Dorsolateral prefrontal cortex (tissue), 120 donors: ENCODE measurements at regions of chr9 and their contacts with region 1.

Region 1: DNA sequence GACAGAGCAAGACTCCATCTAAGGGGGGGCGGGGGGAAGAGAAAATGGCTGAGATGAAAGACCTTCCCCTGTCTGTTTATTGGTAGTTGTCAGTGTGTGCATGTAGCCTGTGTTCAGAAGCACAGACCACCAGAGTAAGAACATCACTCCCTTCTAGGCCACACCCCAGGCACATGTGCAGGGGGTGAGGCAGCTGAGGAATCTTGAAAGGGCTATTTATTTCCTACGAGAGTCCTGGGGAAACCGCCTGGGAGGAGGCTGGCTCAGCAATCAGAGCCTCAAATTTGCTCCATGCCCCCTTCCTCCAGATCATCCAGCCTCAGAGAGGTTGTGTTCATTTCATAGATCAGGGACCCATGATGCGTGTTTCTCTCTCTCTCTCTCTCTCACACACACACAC is 7.1 kb downstream of the MYORG start:
- DNase-seq: no peak
- H3K4me3 ChIP-seq: no peak overlapping the region
- H3K27ac ChIP-seq: no peak overlapping the region
- H3K27me3 ChIP-seq: no peaks in the 10 kb centered on the region
- CTCF ChIP-seq: no peak

Region 2: GRCh38 chr9:34158362-34158869 is 211.2 kb before region 1 on chr9:
- intact Hi-C with region 1: no loop called
- DNase-seq: no peak
- H3K4me3 ChIP-seq: no peak overlapping the region
- H3K27ac ChIP-seq: no peak overlapping the region
- H3K27me3 ChIP-seq: no peaks in the 10 kb centered on the region
- CTCF ChIP-seq: no peak

Region 3: GRCh38 chr9:34271265-34272006 is 98.2 kb before region 1 on chr9:
- intact Hi-C with region 1: no loop called
- DNase-seq: no peak
- H3K4me3 ChIP-seq: no peak overlapping the region
- H3K27ac ChIP-seq: no peak overlapping the region
- H3K27me3 ChIP-seq: no peaks in the 10 kb centered on the region
- CTCF ChIP-seq: no peak

Region 4: GRCh38 chr9:34291023-34291422 is 78.6 kb before region 1 on chr9:
- intact Hi-C with region 1: no loop called
- DNase-seq: no peak
- H3K4me3 ChIP-seq: no peak overlapping the region
- H3K27ac ChIP-seq: no peak overlapping the region
- H3K27me3 ChIP-seq: no peaks in the 10 kb centered on the region
- CTCF ChIP-seq: no peak

Region 5: DNA sequence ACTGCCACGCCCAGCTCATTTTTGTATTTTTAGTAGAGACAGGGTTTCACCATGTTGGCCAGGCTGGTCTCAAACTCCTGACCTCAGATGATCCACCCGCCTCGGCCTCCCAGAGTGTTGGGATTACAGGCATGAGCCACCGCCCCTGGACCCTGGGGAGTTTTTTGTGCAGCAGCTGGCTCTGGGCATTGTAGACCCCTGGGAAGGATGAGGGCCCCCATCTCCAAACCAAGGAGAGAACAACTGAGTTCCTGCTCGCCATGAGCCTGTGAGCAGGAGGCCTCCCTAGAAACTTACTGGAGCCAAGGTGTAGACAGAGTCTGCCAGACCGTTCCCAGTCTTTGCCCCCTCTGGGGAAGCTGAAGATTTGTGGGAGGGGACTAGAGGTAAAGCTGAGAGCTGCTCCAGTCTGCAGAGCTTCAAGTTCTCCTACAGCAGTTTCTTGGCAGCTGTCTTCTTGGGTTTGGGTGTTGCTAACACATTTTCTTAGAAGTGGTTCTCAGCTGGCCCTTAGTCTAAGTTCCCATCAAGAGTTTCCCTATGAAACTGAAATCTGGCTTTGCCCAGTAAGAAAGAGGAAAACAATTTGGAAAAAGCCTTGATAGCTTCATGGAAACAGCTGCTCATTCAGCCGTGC is 27.9 kb before region 1 on chr9:
- intact Hi-C with region 1: loop called in 1 of 2 experiments (anchors 1 kb)
- DNase-seq: no peak
- H3K4me3 ChIP-seq: no peak overlapping the region
- H3K27ac ChIP-seq: peak overlapping the region in 34 of 59 donors; percentile 6 to 75 (median 52)
- H3K27me3 ChIP-seq: no peaks in the 10 kb centered on the region
- CTCF ChIP-seq: no peak

Region 6: GRCh38 chr9:34413231-34413852 is 43.7 kb after region 1 on chr9:
- intact Hi-C with region 1: no loop called
- DNase-seq: peak in 5 of 10 donors; percentile 19 to 62 (median 53)
- H3K4me3 ChIP-seq: no peak overlapping the region
- H3K27ac ChIP-seq: no peak overlapping the region
- H3K27me3 ChIP-seq: no peaks in the 10 kb centered on the region
- CTCF ChIP-seq: no peak